Naive thymus-derived CD8-positive, alpha-beta T cell (primary cell): ENCODE measurements at regions of chr10 and their contacts with region 1.

Region 1: DNA sequence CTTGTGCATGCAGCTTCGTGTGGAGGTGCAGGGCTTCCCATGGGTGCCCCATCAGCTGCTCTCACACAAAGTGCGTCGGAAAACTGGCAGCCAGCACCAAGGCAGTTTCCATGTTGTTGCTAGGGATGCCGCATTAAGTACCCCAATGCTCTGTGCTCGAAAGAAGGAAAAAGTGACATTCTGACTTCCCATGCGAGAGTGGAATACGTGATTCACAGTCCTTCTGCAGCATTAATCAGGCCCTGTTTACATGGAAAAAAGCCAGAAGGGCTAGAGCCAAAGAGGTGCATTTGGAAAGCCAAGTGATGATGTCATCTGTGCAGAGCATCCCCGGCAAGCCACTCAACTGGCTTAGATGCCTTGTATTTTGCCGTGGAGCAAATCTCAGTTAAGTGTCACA is 258.3 kb downstream of the GATA3 start:
- DNase-seq: no peak
- ATAC-seq: no peak
- H3K4me3 Mint-ChIP-seq: no peak overlapping the region
- H3K27ac Mint-ChIP-seq: no peak overlapping the region
- H3K4me1 Mint-ChIP-seq: peaks cover 0 to 12% (median 2%) of the 10 kb centered on the region in 4 donors
- H3K27me3 Mint-ChIP-seq: peaks cover 0 to 1% (median 0%) of the 10 kb centered on the region in 5 donors

Region 2: DNA sequence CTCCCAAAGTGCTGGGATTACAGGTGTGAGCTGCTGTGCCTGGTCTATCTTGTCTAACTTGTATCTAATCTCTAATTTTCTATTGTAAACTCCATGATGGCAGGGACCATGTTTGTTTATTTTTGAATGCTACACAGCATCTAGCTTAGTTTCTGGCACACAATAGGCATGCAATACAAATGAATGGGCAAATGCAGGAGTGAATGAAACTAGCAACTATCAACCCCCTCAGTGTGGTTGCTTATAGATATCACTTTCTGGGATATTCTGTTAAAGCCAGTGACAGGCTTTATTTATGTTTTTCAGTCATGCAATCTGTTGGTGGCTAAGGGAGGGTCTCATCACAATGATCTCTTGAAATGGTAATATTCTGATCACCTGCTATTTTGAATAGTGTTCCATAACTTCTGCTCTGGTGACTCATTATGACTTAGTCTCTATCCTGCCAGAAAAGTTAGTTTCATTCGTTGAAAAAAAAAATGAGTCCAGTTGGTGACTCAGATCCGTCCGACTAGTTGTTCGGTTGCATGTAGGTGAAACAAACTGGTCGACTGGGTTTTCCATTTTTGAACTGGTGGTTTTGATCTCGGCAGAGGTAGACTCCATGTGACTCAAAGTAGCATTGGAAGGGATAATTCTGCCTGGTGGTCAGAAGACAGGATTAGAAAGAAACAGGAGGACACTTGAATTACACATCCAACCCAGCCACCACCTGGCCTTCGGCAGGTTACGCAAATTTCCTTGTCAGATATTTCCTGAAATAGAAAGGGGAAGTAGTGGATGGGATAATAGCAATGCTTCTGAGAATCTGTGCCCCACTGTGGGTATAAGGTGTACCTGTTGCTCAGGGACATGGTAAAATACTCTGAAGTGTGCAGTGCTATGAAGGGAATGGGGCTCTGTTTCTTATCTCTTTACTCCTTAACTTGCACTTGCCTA is 181.5 kb before region 1 on chr10:
- POLR2A ChIA-PET with region 1: no interaction called
- DNase-seq: no peak
- ATAC-seq: no peak
- H3K4me3 Mint-ChIP-seq: no peak overlapping the region
- H3K27ac Mint-ChIP-seq: no peak overlapping the region
- H3K4me1 Mint-ChIP-seq: peaks cover 3 to 20% (median 11%) of the 10 kb centered on the region in 4 donors
- H3K27me3 Mint-ChIP-seq: peaks cover 0 to 26% (median 11%) of the 10 kb centered on the region in 5 donors

Region 3: DNA sequence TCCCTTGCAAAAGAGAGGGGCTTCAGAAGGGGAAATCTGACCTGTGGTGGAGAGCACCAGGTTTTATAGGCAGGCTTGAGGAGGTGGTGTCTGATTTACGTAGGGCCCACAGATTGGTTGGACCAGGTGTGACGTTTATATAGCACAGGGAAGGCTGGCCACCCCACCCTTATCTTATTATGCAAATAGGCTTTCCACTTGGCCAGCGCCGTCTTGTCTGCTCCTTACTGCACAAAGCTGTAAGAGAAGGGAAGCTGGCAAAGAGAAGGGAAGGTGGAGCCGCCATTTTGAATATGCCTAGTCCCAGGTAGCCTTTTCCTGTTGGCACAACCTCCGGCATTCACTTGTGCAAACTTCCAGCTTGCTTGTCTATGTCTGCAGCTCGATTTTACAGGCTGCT is 36.9 kb before region 1 on chr10:
- POLR2A ChIA-PET with region 1: interaction called, 10 read pairs
- DNase-seq: no peak
- ATAC-seq: no peak
- H3K4me3 Mint-ChIP-seq: no peak overlapping the region
- H3K27ac Mint-ChIP-seq: no peak overlapping the region
- H3K4me1 Mint-ChIP-seq: peaks cover 0 to 2% (median 0%) of the 10 kb centered on the region in 4 donors
- H3K27me3 Mint-ChIP-seq: peaks cover 0 to 3% (median 0%) of the 10 kb centered on the region in 5 donors

Region 4: GRCh38 chr10:8289241-8289924 is 23.4 kb before region 1 on chr10:
- POLR2A ChIA-PET with region 1: no interaction called
- DNase-seq: no peak
- ATAC-seq: no peak
- H3K4me3 Mint-ChIP-seq: no peak overlapping the region
- H3K27ac Mint-ChIP-seq: peak overlapping the region in 1 of 10 donors; percentile 89
- H3K4me1 Mint-ChIP-seq: peaks cover 0 to 8% (median 3%) of the 10 kb centered on the region in 4 donors
- H3K27me3 Mint-ChIP-seq: peaks cover 0 to 2% (median 0%) of the 10 kb centered on the region in 5 donors

Region 5: GRCh38 chr10:8336629-8337331 is 24.0 kb after region 1 on chr10:
- POLR2A ChIA-PET with region 1: no interaction called
- DNase-seq: no peak
- ATAC-seq: no peak
- H3K4me3 Mint-ChIP-seq: no peak overlapping the region
- H3K27ac Mint-ChIP-seq: peak overlapping the region in 1 of 10 donors; percentile 44
- H3K4me1 Mint-ChIP-seq: peaks cover 7 to 14% (median 13%) of the 10 kb centered on the region in 4 donors
- H3K27me3 Mint-ChIP-seq: peaks cover 0 to 2% (median 0%) of the 10 kb centered on the region in 5 donors

Region 6: GRCh38 chr10:8389630-8390029 is 76.8 kb after region 1 on chr10:
- POLR2A ChIA-PET with region 1: no interaction called
- DNase-seq: no peak
- ATAC-seq: no peak
- H3K4me3 Mint-ChIP-seq: no peak overlapping the region
- H3K27ac Mint-ChIP-seq: peak overlapping the region in 1 of 10 donors; percentile 38
- H3K4me1 Mint-ChIP-seq: peaks cover 0 to 8% (median 1%) of the 10 kb centered on the region in 4 donors
- H3K27me3 Mint-ChIP-seq: peaks cover 0 to 9% (median 0%) of the 10 kb centered on the region in 5 donors